ENCODE measurements at regions of chr16 and their contacts with region 1.

Region 1: GRCh38 chr16:84995663-84996062 is 15.7 kb downstream of the ZDHHC7 start:
- DNase-seq: peak; percentile 70
- H3K4me3 Mint-ChIP-seq: peak overlapping the region; percentile 59
- H3K27ac Mint-ChIP-seq: peak overlapping the region; percentile 96
- H3K4me1 Mint-ChIP-seq: peaks cover 48% of the 10 kb centered on the region
- H3K27me3 Mint-ChIP-seq: no peaks in the 10 kb centered on the region
- CTCF ChIP-seq: no peak

Region 2: DNA sequence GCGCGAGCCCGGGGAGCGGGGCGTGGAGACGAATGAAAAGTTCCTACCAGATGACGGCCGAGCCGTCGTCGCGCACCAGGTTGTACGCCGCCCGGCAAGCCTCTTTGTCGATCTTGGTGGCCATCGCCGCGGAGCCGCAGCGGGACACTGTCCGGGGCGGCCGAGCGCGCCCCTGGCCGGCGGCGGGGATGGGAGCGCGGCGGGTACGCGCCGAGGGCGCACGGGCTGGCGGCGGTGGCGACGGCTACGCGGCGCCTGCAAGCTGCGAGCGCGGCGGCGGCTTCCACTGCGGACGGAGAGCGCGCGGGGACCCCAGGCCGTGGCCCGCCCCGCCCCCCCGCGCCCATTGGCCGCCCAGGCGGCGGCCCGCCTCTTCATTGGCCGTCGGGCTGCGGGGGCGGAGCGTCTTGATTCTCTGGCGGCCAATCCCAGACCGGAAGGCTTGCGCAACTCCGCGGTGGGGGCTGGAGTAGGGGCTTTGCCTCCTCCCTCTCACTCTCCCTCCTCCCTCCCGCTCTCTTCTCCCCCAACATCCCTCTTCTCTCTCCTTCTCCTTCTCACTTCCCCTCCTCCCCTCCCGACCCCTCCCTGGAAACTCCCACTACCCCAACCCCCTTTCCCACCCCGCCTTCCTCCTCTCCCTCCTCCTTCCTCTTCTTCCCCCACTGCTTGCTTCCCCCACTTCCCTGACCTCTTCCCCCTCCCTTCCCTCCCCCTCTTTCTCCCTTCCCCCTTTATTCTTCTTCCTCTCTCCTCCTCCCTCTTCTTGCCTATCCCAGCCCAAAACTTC is 377.7 kb before region 1 on chr16 and contains the start of gene COTL1:
- CTCF ChIA-PET with region 1: no interaction called
- POLR2A ChIA-PET with region 1: no interaction called
- intact Hi-C with region 1: no loop called
- DNase-seq: peak; percentile 98
- H3K4me3 Mint-ChIP-seq: peak within 1 kb of the TSS; percentile 90
- H3K27ac Mint-ChIP-seq: peak within 1 kb of the TSS; percentile 63
- H3K4me1 Mint-ChIP-seq: peaks cover 25% of the 10 kb centered on the region
- H3K27me3 Mint-ChIP-seq: no peaks in the 10 kb centered on the region
- CTCF ChIP-seq: no peak
- total RNA-seq, gene COTL1: 151 and 269 TPM in 2 replicates

Region 3: DNA sequence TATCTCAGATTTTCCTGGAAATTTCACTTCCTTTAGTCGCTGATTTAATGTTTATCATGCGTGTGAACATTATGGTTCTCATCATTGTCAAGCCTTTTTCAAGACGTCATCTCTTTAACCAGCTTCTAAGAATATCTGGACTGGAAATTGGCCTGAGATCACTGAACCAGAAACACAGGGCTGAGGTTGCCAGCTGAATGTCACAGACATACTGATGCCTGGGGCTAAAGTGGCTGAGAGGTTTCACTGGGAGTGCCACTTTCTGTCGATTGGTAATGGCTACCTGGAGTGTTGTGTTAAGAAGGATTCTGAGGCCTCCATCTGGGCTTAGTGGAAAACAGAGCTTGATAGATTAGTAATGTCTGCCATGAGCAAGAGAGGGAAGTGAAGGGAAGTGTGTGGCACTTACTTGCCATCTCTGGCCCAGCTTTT is 121.6 kb before region 1 on chr16:
- CTCF ChIA-PET with region 1: no interaction called
- POLR2A ChIA-PET with region 1: no interaction called
- intact Hi-C with region 1: no loop called
- DNase-seq: no peak
- H3K4me3 Mint-ChIP-seq: no peak overlapping the region
- H3K27ac Mint-ChIP-seq: no peak overlapping the region
- H3K4me1 Mint-ChIP-seq: no peaks in the 10 kb centered on the region
- H3K27me3 Mint-ChIP-seq: no peaks in the 10 kb centered on the region
- CTCF ChIP-seq: no peak

Region 4: GRCh38 chr16:84959045-84959576 is 36.6 kb before region 1 on chr16:
- CTCF ChIA-PET with region 1: no interaction called
- POLR2A ChIA-PET with region 1: no interaction called
- intact Hi-C with region 1: no loop called
- DNase-seq: no peak
- H3K4me3 Mint-ChIP-seq: no peak overlapping the region
- H3K27ac Mint-ChIP-seq: no peak overlapping the region
- H3K4me1 Mint-ChIP-seq: peaks cover 5% of the 10 kb centered on the region
- H3K27me3 Mint-ChIP-seq: peaks cover 41% of the 10 kb centered on the region
- CTCF ChIP-seq: peak; percentile 20

Region 5: GRCh38 chr16:84982434-84982833 is 13.2 kb before region 1 on chr16:
- CTCF ChIA-PET with region 1: no interaction called
- POLR2A ChIA-PET with region 1: interaction called, 11 read pairs
- intact Hi-C with region 1: no loop called
- DNase-seq: no peak
- H3K4me3 Mint-ChIP-seq: no peak overlapping the region
- H3K27ac Mint-ChIP-seq: peak overlapping the region; percentile 77
- H3K4me1 Mint-ChIP-seq: peaks cover 28% of the 10 kb centered on the region
- H3K27me3 Mint-ChIP-seq: no peaks in the 10 kb centered on the region
- CTCF ChIP-seq: no peak

Region 6: GRCh38 chr16:85010931-85011845 is 15.5 kb after region 1 on chr16 and contains the start of gene ZDHHC7:
- CTCF ChIA-PET with region 1: interaction called, 7 read pairs
- POLR2A ChIA-PET with region 1: interaction called, 336 read pairs
- intact Hi-C with region 1: no loop called
- DNase-seq: peak; percentile 75
- H3K4me3 Mint-ChIP-seq: peak within 1 kb of the TSS; percentile 84
- H3K27ac Mint-ChIP-seq: peak within 1 kb of the TSS; percentile 99
- H3K4me1 Mint-ChIP-seq: peaks cover 15% of the 10 kb centered on the region
- H3K27me3 Mint-ChIP-seq: no peaks in the 10 kb centered on the region
- CTCF ChIP-seq: no peak
- total RNA-seq, gene ZDHHC7: 46.3 and 54.5 TPM in 2 replicates

Region 7: DNA sequence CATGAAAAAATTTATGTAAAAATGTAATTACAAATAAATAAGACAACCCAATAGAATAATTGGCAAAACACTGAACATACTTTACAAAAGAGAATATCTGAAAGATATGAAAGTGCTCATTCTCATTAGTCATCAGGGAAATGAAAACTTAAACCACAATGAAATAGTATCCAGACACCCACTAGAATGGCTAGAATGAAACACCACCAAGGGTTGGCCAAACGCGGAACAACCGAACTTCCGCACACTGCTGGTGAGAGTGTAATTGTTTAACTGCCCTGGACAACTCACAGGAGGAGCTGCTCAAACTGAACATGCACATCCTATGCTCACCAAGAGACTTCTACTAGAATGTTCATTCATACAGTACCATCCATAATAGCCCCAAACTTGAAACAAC is 21.5 kb after region 1 on chr16:
- CTCF ChIA-PET with region 1: no interaction called
- POLR2A ChIA-PET with region 1: interaction called, 336 read pairs
- intact Hi-C with region 1: no loop called
- DNase-seq: no peak
- H3K4me3 Mint-ChIP-seq: no peak overlapping the region
- H3K27ac Mint-ChIP-seq: no peak overlapping the region
- H3K4me1 Mint-ChIP-seq: peaks cover 15% of the 10 kb centered on the region
- H3K27me3 Mint-ChIP-seq: no peaks in the 10 kb centered on the region
- CTCF ChIP-seq: no peak

Region 8: GRCh38 chr16:85037050-85037410 is 41.4 kb after region 1 on chr16:
- CTCF ChIA-PET with region 1: no interaction called
- POLR2A ChIA-PET with region 1: interaction called, 11 read pairs
- intact Hi-C with region 1: loop called (anchors 2 kb)
- DNase-seq: peak; percentile 96
- H3K4me3 Mint-ChIP-seq: peak overlapping the region; percentile 32
- H3K27ac Mint-ChIP-seq: peak overlapping the region; percentile 72
- H3K4me1 Mint-ChIP-seq: peaks cover 16% of the 10 kb centered on the region
- H3K27me3 Mint-ChIP-seq: no peaks in the 10 kb centered on the region
- CTCF ChIP-seq: no peak

Region 9: GRCh38 chr16:86016201-86016871 is 1020.7 kb after region 1 on chr16:
- CTCF ChIA-PET with region 1: no interaction called
- POLR2A ChIA-PET with region 1: no interaction called
- intact Hi-C with region 1: no loop called
- DNase-seq: peak; percentile 64
- H3K4me3 Mint-ChIP-seq: no peak overlapping the region
- H3K27ac Mint-ChIP-seq: no peak overlapping the region
- H3K4me1 Mint-ChIP-seq: no peaks in the 10 kb centered on the region
- H3K27me3 Mint-ChIP-seq: peaks cover 60% of the 10 kb centered on the region
- CTCF ChIP-seq: peak; percentile 85